AG04450 (cell line): ENCODE measurements at regions of chr2 and their contacts with region 1.

Region 1: DNA sequence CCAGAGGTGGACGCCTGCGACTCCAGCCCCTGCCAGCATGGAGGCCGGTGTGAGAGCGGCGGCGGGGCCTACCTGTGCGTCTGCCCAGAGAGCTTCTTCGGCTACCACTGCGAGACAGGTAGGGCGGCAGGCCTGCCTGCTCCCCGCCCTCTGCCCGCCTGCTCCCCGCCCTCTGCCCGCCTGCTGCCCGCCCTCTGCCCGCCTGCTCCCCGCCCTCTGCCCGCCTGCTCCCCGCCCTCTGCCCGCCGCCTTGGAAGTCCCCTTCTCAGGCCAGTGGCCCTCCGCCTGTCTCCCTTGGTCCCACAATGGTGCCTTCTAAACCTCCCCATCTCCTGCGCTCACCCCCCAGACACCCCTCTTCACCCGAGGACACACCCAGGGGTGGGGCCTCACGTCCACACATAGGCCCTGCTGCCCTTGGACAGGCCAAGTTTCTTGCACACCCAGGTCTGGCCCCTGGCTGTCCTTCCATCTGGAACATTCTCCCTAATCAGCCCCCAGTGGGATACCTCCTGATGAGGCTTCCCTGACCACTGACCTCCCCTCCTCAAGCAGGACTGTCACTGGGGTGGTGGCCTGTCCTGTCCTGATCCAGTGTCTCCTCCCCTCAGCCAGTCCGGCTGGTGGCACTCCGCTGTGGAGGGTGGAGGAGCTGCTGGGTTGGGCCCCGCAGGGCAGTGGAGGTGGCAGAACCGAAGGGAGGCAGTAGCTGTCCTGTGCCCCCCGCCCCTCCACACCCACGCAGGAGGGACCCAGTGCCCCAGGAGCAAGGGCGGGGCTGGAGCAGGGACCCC is 37.9 kb downstream of the MTERF4 start:
- DNase-seq: no peak
- H3K4me3 ChIP-seq: no peak overlapping the region
- H3K27ac ChIP-seq: no peak overlapping the region
- H3K27me3 ChIP-seq: no peaks in the 10 kb centered on the region
- CTCF ChIP-seq: no peak

Region 2: GRCh38 chr2:241049739-241050623 is 14.2 kb before region 1 on chr2:
- CTCF ChIA-PET with region 1: no interaction called
- POLR2A ChIA-PET with region 1: no interaction called
- DNase-seq: no peak
- H3K4me3 ChIP-seq: no peak overlapping the region
- H3K27ac ChIP-seq: no peak overlapping the region
- H3K27me3 ChIP-seq: no peaks in the 10 kb centered on the region
- CTCF ChIP-seq: no peak

Region 3: DNA sequence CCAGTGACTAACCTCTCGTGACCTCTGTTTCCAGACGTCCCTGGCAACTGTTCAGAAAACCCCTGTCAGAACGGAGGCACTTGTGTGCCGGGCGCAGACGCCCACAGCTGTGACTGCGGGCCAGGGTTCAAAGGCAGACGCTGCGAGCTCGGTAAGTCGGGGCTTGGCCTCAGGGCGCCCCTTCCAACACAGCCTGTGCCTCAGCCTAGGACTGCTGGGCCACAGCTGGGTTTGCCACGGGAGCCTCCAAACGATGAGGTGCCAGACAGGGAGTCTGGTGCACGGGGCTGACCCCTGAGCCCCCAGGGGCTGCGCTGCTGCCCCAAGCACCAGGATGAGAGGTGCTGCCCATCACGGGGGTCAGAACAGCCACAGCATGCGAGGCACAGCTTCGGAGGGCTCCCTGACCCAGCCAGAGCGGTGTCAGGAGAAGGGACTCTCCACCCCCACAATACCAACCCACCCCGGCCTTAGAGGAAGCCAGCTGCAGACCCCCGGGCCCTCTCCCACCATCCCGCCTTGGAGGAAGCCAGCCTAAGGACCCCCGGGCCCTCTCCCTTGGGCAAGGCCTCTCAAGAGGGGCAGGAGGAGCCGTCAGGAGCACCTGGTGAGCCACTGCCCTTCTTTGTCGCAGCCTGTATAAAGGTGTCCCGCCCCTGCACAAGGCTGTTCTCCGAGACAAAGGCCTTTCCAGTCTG is 17.6 kb after region 1 on chr2:
- CTCF ChIA-PET with region 1: interaction called, 18 read pairs
- POLR2A ChIA-PET with region 1: no interaction called
- DNase-seq: no peak
- H3K4me3 ChIP-seq: no peak overlapping the region
- H3K27ac ChIP-seq: no peak overlapping the region
- H3K27me3 ChIP-seq: no peaks in the 10 kb centered on the region
- CTCF ChIP-seq: no peak